Activated CD4-positive, alpha-beta T cell treated with anti-CD3 and anti-CD28 coated beads for 36 hours (primary cell): ENCODE measurements at regions of chr10 and their contacts with region 1.

Region 1: DNA sequence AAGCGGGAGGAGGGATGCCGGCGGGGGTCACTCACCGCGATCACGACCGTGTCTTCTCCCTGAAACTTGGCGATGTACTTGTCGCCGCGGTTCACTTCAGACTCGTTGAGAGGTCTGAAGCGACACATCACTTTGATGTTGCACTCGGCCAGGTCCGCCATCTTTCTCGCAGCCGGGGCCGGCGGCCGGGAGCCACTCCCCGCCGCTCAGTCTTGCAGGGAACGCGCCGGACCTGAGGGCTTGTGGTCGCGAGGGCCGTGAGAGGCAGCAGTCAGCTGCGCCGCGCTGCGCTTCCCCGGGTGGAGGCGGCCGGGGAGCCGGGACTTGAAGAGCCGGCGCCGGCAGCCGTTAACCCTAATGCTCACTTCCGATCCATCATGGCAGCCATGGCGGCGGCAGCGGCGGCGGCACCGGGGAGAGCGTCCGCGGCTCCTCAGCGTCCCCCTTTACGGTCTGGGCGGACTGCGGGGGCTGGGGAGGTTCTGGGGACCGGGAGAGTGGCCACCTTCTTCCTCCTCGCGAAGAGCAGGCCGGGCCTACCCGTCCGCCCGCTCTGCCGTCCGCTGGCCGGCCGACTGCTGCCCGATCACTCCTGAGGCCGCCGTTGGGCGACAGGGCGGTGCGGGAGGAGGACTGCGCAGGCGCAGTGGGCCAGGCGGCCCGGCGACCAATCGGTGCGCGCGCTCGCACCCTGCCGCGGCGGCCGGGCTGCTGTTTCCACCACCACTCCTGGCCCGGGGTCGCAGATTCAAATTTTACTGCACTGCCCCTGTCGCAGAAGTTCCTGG is at the start of gene KIF5B:
- DNase-seq: peak; percentile 92
- ATAC-seq: peak; percentile 92
- H3K4me3 Mint-ChIP-seq: peak within 1 kb of the TSS; percentile 97
- H3K27ac Mint-ChIP-seq: peak within 1 kb of the TSS; percentile 96
- H3K4me1 Mint-ChIP-seq: peaks cover 37% of the 10 kb centered on the region
- H3K27me3 Mint-ChIP-seq: no peaks in the 10 kb centered on the region
- total RNA-seq, gene KIF5B: 57.4 to 59.9 TPM

Region 2: GRCh38 chr10:31490858-31491504 is 565.0 kb before region 1 on chr10:
- CTCF ChIA-PET with region 1: no interaction called
- POLR2A ChIA-PET with region 1: no interaction called
- intact Hi-C with region 1: no loop called
- DNase-seq: peak; percentile 32
- ATAC-seq: peak; percentile 51
- H3K4me3 Mint-ChIP-seq: no peak overlapping the region
- H3K27ac Mint-ChIP-seq: no peak overlapping the region
- H3K4me1 Mint-ChIP-seq: peaks cover 2% of the 10 kb centered on the region
- H3K27me3 Mint-ChIP-seq: no peaks in the 10 kb centered on the region

Region 3: DNA sequence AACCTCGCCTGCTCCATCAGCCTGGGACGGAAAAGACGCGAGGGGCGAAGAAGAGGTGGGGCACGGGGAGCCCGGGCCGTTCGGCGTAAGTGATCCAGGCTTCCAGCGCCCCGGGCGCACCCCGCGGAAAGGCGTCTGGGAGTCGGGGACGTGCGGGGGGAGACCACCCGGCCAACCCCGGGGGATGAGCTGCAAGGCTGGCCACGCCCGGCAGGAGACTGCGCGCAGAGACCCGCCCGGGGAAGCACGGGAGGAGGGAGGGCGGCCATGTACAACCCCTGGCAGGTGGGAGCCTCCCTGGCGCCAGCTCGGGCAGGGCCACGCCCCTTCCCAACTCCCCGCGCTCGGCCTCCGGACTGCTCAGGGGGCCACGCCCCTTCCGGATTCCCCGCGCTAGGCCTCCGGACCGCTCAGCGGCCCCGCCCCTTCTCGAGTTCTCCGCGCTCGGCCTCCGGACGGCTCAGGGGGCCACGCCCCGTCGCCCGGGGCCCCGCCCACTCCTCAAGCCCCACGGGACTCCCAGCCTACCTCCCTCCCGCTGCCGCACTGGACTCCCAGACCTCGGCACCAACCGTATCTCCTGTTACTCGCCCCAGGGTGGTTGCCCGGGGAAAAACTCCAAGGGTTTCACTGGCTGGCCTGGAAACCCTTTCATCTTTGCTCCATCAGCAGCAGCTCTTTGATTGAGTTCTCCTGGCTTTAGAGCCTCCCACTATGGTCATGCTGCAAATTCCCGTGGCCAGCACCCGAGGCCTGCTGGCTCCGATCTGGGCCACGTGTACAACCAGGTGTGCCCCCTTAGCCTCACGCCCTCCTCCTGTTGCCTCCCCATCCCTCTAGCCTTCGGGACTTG is 452.5 kb before region 1 on chr10:
- CTCF ChIA-PET with region 1: no interaction called
- POLR2A ChIA-PET with region 1: interaction called, 4 read pairs
- intact Hi-C with region 1: loop called in 1 of 2 experiments (anchors 1 kb)
- DNase-seq: peak; percentile 94
- ATAC-seq: peak; percentile 92
- H3K4me3 Mint-ChIP-seq: peak overlapping the region; percentile 76
- H3K27ac Mint-ChIP-seq: peak overlapping the region; percentile 17
- H3K4me1 Mint-ChIP-seq: peaks cover 33% of the 10 kb centered on the region
- H3K27me3 Mint-ChIP-seq: peaks cover 2% of the 10 kb centered on the region

Region 4: DNA sequence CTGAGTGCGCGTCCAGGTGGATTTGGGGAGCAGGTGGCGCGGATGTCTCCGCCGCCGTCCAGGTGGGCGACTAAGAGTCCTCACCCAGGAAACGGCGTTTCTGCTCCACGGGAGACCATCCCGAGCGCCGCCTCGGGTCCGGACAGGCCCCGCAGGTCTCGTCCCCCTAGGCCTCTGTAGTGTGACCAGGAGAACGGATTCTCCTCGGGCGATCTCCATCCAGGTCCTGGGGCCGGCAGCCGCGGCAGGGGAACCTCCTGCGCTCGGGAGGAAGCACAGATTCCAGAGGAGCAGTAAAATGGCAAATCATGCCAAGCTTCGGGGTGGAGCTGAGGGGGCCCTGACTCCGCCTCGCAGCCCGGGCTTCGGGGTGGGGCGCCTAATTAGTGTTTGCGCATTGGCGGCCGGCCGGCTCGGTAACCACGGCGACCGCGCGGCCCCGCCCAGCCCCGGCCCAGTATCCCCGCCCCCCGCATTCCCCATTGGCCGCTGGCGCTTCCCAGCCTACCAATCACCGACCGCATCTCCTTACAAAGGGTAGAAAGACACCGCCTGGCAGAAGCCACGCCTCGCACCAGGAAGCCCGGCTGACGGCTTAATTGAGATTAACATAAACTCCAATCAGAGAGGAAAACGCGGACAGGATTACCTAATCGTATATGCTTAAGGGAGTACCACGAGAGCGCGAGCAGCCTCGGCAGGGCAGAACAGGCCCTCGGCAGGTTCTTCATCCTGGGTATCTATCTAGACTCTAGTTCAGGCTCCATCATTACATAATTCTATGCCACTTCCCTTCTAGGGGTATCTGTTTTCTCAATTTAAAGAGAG is 296.0 kb before region 1 on chr10:
- CTCF ChIA-PET with region 1: no interaction called
- POLR2A ChIA-PET with region 1: no interaction called
- intact Hi-C with region 1: loop called in 1 of 2 experiments (anchors 5 kb)
- DNase-seq: peak; percentile 97
- ATAC-seq: peak; percentile 94
- H3K4me3 Mint-ChIP-seq: peak overlapping the region; percentile 91
- H3K27ac Mint-ChIP-seq: peak overlapping the region; percentile 94
- H3K4me1 Mint-ChIP-seq: peaks cover 15% of the 10 kb centered on the region
- H3K27me3 Mint-ChIP-seq: no peaks in the 10 kb centered on the region

Region 5: GRCh38 chr10:32149252-32149955 is 93.4 kb after region 1 on chr10:
- CTCF ChIA-PET with region 1: no interaction called
- POLR2A ChIA-PET with region 1: no interaction called
- intact Hi-C with region 1: loop called (anchors 2 to 5 kb)
- DNase-seq: peak; percentile 62
- ATAC-seq: peak; percentile 87
- H3K4me3 Mint-ChIP-seq: no peak overlapping the region
- H3K27ac Mint-ChIP-seq: peak overlapping the region; percentile 75
- H3K4me1 Mint-ChIP-seq: peaks cover 32% of the 10 kb centered on the region
- H3K27me3 Mint-ChIP-seq: no peaks in the 10 kb centered on the region

Region 6: GRCh38 chr10:32332299-32332750 is 276.3 kb after region 1 on chr10:
- CTCF ChIA-PET with region 1: no interaction called
- POLR2A ChIA-PET with region 1: no interaction called
- intact Hi-C with region 1: loop called in 1 of 2 experiments (anchors 10 kb)
- DNase-seq: peak; percentile 87
- ATAC-seq: peak; percentile 95
- H3K4me3 Mint-ChIP-seq: peak overlapping the region; percentile 75
- H3K27ac Mint-ChIP-seq: peak overlapping the region; percentile 98
- H3K4me1 Mint-ChIP-seq: peaks cover 96% of the 10 kb centered on the region
- H3K27me3 Mint-ChIP-seq: no peaks in the 10 kb centered on the region

Region 7: DNA sequence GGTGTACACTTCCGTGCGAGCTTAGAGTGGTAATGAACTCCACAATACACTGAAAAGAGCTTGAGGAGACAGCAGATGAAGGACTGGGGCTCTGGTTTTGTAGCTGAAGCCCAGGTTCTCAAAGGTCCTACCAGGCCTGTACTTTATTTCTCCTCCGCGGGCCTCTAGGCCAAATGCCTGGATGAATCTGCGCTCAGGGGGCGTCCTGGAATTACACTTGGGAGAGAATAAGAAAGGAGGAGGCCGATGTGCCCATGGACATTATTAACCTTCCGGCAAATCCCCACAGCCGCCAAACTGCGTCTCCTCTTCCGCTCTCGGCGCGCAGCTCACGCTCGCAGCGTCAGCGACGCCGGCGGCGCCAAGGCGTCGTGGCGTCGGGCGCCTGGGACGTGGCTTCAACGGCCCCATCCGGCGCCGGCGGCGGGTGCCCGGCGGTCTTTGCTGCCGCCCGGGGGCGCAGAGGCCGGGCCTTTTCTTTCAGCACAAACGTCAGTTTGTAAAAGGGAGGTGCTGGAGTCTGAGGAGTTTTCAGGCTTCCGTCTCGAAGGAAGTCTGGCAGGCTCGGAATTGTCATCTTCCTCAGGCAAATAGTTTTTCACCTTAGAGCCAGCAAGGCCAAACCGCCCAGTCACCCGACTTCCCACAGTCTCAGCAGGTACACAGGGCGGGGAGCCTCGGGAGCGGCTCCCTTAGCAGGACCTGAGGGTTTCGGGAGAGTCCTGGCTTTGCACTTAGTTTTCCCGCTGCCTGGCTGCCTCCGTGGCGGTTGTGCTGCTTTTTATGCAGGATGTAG is 389.9 kb after region 1 on chr10 and contains the start of gene CCDC7:
- CTCF ChIA-PET with region 1: no interaction called
- POLR2A ChIA-PET with region 1: interaction called, 3 read pairs
- intact Hi-C with region 1: loop called (anchors 2 to 10 kb)
- DNase-seq: peak; percentile 91
- ATAC-seq: peak; percentile 97
- H3K4me3 Mint-ChIP-seq: peak within 1 kb of the TSS; percentile 82
- H3K27ac Mint-ChIP-seq: peak within 1 kb of the TSS; percentile 99
- H3K4me1 Mint-ChIP-seq: peaks cover 10% of the 10 kb centered on the region
- H3K27me3 Mint-ChIP-seq: no peaks in the 10 kb centered on the region
- total RNA-seq, gene CCDC7: 9.0 TPM

Region 8: GRCh38 chr10:33760056-33760943 is 1704.3 kb after region 1 on chr10:
- CTCF ChIA-PET with region 1: no interaction called
- POLR2A ChIA-PET with region 1: no interaction called
- intact Hi-C with region 1: no loop called
- DNase-seq: no peak
- ATAC-seq: no peak
- H3K4me3 Mint-ChIP-seq: no peak overlapping the region
- H3K27ac Mint-ChIP-seq: no peak overlapping the region
- H3K4me1 Mint-ChIP-seq: no peaks in the 10 kb centered on the region
- H3K27me3 Mint-ChIP-seq: no peaks in the 10 kb centered on the region